ENCODE measurements at regions of chr7 and their contacts with region 1.

Region 1: DNA sequence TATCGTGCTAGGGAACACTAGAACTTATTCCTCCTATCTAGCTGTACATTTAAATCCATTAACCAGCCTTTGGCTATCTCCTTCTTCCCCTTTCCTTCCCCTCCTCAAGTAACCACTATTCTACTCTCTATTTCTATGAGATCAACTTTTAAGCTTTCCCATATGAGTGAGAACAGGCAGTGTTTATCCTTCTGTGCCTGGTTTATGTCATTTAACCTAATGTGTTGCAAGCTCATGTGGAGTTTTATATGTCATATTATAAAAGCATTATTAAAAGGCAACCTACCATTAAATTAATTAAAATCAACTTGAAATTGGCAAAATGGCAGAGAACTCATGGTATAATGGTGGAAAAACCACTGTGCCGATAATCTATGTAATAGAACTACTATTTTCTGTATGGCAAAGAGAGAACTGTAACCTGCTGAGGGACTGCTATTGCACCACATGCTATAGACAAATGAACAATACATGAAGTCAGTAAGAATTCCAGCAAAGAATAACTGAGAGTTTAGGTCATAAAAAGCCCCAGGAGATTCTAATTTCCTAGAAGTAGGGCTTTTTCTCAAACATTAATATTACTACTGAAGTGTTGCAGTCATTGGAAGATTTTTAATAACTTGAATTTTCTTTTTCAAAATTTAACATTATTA is 81.8 kb downstream of the LRRN3 start:
- DNase-seq: no peak
- ATAC-seq: peak; percentile 29
- H3K4me3 ChIP-seq: no peak overlapping the region
- H3K27ac ChIP-seq: no peak overlapping the region
- H3K4me1 ChIP-seq: peaks cover 0 to 11% of the 10 kb centered on the region in 2 experiments; a peak in 3 of 5 replicates
- H3K27me3 ChIP-seq: no peaks in the 10 kb centered on the region
- CTCF ChIP-seq: no peak
- EP300 ChIP-seq: no peak
- POLR2A ChIP-seq: no peak
- RAD21 ChIP-seq: no peak

Region 2: DNA sequence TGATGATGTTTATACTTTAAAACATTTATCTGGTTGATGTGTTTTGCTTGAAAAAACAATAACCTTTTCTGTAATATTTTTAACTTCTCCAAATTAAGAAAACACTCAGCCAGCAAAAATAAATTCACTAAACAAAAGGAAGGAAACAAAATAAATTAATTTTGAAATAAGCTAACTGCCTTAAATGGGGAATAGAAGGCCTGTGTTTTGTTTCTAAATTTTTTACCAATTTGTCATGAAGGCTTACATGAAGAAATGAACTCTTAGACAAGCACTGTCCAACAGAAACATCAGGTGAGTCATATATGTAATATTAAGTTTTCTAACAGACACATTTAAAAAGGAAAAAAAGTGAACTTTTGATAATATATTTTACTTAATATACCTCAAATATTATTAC is 13.3 kb before region 1 on chr7:
- CTCF ChIA-PET with region 1: no interaction called
- POLR2A ChIA-PET with region 1: interaction called, 14 read pairs
- in situ Hi-C with region 1: no loop called
- intact Hi-C with region 1: no loop called
- DNase-seq: no peak
- ATAC-seq: no peak
- H3K4me3 ChIP-seq: no peak overlapping the region
- H3K27ac ChIP-seq: no peak overlapping the region
- H3K4me1 ChIP-seq: no peaks in the 10 kb centered on the region
- H3K27me3 ChIP-seq: no peaks in the 10 kb centered on the region
- CTCF ChIP-seq: no peak
- EP300 ChIP-seq: no peak
- POLR2A ChIP-seq: no peak
- RAD21 ChIP-seq: no peak

Region 3: GRCh38 chr7:111183321-111183720 is 10.6 kb after region 1 on chr7:
- CTCF ChIA-PET with region 1: no interaction called
- POLR2A ChIA-PET with region 1: interaction called, 14 read pairs
- in situ Hi-C with region 1: no loop called
- intact Hi-C with region 1: no loop called
- DNase-seq: no peak
- ATAC-seq: no peak
- H3K4me3 ChIP-seq: no peak overlapping the region
- H3K27ac ChIP-seq: no peak overlapping the region
- H3K4me1 ChIP-seq: no peaks in the 10 kb centered on the region
- H3K27me3 ChIP-seq: no peaks in the 10 kb centered on the region
- CTCF ChIP-seq: no peak
- EP300 ChIP-seq: no peak
- POLR2A ChIP-seq: no peak
- RAD21 ChIP-seq: no peak